Activated CD4-positive, alpha-beta memory T cell treated with anti-CD3 and anti-CD28 coated beads for 36 hours (primary cell): ENCODE measurements at regions of chr2 and their contacts with region 1.

Region 1: GRCh38 chr2:200811336-200812121 is at the start of gene BZW1:
- DNase-seq: peak; percentile 98
- H3K4me3 Mint-ChIP-seq: peak within 1 kb of the TSS; percentile 100
- H3K27ac Mint-ChIP-seq: peak within 1 kb of the TSS; percentile 100
- H3K4me1 Mint-ChIP-seq: peaks cover 44% of the 10 kb centered on the region
- H3K27me3 Mint-ChIP-seq: peaks cover 1% of the 10 kb centered on the region
- total RNA-seq, gene BZW1: 416 to 423 TPM

Region 2: DNA sequence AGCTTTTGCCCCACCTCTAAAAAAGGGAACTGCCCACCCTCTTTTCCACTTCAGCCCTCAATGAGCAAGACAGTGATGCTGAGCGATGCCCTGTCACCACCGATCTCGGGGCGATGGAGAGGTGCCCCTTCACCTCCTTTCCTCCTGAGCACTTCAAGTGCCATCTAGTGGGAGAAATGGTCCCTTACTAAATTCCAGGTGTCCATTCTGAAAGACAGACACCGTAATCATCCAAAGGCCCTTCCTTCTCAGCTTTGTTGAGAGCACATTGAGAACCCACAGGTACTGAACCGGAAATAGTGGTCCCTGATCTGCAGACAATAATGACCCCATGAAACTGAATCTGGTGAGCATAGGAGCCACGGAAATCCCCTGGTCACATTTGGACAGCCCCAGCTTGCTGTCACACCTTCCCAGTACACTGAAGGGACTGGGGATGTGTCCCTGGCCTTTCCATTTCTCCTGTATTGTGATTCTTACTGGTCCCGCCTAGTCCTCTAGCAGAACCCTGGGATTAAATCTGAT is 340.1 kb before region 1 on chr2:
- CTCF ChIA-PET with region 1: no interaction called
- POLR2A ChIA-PET with region 1: no interaction called
- intact Hi-C with region 1: loop called (anchors 5 kb)
- DNase-seq: peak; percentile 63
- H3K4me3 Mint-ChIP-seq: no peak overlapping the region
- H3K27ac Mint-ChIP-seq: no peak overlapping the region
- H3K4me1 Mint-ChIP-seq: peaks cover 35% of the 10 kb centered on the region
- H3K27me3 Mint-ChIP-seq: no peaks in the 10 kb centered on the region

Region 3: GRCh38 chr2:200578778-200579177 is 232.8 kb before region 1 on chr2:
- CTCF ChIA-PET with region 1: no interaction called
- POLR2A ChIA-PET with region 1: no interaction called
- intact Hi-C with region 1: loop called (anchors 1 kb)
- DNase-seq: no peak
- H3K4me3 Mint-ChIP-seq: no peak overlapping the region
- H3K27ac Mint-ChIP-seq: no peak overlapping the region
- H3K4me1 Mint-ChIP-seq: peaks cover 12% of the 10 kb centered on the region
- H3K27me3 Mint-ChIP-seq: no peaks in the 10 kb centered on the region

Region 4: GRCh38 chr2:200658278-200658864 is 153.2 kb before region 1 on chr2:
- CTCF ChIA-PET with region 1: no interaction called
- POLR2A ChIA-PET with region 1: no interaction called
- intact Hi-C with region 1: no loop called
- DNase-seq: no peak
- H3K4me3 Mint-ChIP-seq: no peak overlapping the region
- H3K27ac Mint-ChIP-seq: no peak overlapping the region
- H3K4me1 Mint-ChIP-seq: no peaks in the 10 kb centered on the region
- H3K27me3 Mint-ChIP-seq: peaks cover 34% of the 10 kb centered on the region

Region 5: DNA sequence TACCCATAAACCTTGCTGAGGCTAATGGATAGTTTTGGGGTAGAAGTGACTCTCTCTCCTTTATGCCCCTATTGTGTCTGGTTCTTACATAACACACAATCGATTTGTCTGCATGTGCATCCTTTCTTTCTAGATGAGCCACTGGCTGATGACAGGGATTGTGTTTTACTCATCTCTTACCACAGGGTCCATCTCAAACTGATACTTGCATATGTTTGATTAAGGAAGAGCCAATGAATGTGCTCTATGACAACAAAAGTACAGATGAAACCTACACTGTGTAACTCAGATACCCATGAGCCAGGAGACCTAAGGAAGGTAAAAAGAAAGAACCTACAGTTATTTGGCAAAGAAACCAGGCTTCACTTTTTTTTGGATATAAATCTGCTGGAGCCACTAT is 13.0 kb before region 1 on chr2:
- CTCF ChIA-PET with region 1: no interaction called
- POLR2A ChIA-PET with region 1: interaction called, 6 read pairs
- intact Hi-C with region 1: loop called (anchors 1 kb)
- DNase-seq: peak; percentile 18
- H3K4me3 Mint-ChIP-seq: no peak overlapping the region
- H3K27ac Mint-ChIP-seq: no peak overlapping the region
- H3K4me1 Mint-ChIP-seq: peaks cover 4% of the 10 kb centered on the region
- H3K27me3 Mint-ChIP-seq: no peaks in the 10 kb centered on the region

Region 6: DNA sequence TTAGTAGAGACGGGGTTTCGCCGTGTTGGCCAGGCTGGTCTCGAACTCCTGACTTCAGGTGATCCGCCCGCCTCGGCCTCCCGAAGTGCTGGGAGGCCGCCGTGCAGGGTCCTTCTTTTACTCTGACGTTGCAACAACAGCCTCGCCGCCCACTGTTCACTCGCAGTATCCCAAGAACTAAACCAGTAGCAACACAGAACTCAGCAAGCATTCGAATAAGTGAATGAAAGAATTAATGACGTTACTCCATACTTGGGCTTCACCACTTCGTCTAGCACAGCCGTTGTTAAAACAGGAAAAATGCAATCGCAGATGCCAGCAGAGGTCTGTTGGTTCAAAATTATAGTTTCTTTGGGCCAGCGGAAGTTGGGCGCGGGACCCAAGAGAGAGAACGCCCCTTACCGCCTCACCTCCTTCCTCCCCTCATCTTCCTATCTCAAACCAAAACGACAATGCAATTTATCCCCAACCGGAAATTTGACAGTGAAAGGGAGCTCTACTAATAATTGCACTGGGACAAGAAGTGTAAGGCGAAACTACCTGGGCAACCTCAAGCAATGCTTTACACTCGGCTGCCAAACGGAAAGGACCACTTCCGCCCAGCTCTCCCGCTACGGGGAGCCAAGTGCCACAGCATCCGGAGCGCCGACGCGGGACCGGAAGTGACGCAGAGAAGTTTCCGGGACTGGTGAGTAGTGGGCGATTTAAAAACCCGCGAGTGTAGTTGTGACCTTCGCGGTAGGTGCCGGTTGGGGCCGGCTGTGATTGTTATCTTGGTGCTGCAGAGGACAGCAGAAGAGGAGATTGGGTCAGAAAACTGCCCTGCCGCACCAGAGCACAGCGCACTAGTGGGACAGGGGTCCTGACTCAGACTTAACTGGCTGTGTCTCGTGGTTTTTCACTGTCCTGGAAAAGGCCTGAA is 77.4 kb after region 1 on chr2 and contains the starts of genes NIF3L1 and PPIL3:
- CTCF ChIA-PET with region 1: no interaction called
- POLR2A ChIA-PET with region 1: interaction called, 3 read pairs
- intact Hi-C with region 1: loop called (anchors 1 kb)
- DNase-seq: peak; percentile 99
- H3K4me3 Mint-ChIP-seq: peak within 1 kb of the TSS; percentile 98
- H3K27ac Mint-ChIP-seq: peak within 1 kb of the TSS; percentile 100
- H3K4me1 Mint-ChIP-seq: peaks cover 44% of the 10 kb centered on the region
- H3K27me3 Mint-ChIP-seq: no peaks in the 10 kb centered on the region
- total RNA-seq, gene NIF3L1: 30.8 to 32.7 TPM
- total RNA-seq, gene PPIL3: 84.0 to 87.9 TPM

Region 7: GRCh38 chr2:202265467-202266277 is 1454.1 kb after region 1 on chr2 and contains the start of gene NOP58:
- CTCF ChIA-PET with region 1: no interaction called
- POLR2A ChIA-PET with region 1: no interaction called
- intact Hi-C with region 1: loop called (anchors 2 kb)
- DNase-seq: peak; percentile 96
- H3K4me3 Mint-ChIP-seq: peak within 1 kb of the TSS; percentile 49
- H3K27ac Mint-ChIP-seq: peak within 1 kb of the TSS; percentile 70
- H3K4me1 Mint-ChIP-seq: peaks cover 19% of the 10 kb centered on the region
- H3K27me3 Mint-ChIP-seq: no peaks in the 10 kb centered on the region
- total RNA-seq, gene NOP58: 151 to 155 TPM